ENCODE measurements at regions of chr1 and their contacts with region 1.

Region 1: GRCh38 chr1:21674942-21675341 is 5.8 kb upstream of the RAP1GAP start:
- DNase-seq: no peak
- H3K4me3 ChIP-seq: no peak overlapping the region
- H3K27ac ChIP-seq: no peak overlapping the region
- H3K4me1 ChIP-seq: peaks cover 12% of the 10 kb centered on the region
- H3K27me3 ChIP-seq: no peaks in the 10 kb centered on the region
- CTCF ChIP-seq: no peak
- EP300 ChIP-seq: no peak
- POLR2A ChIP-seq: no peak

Region 2: DNA sequence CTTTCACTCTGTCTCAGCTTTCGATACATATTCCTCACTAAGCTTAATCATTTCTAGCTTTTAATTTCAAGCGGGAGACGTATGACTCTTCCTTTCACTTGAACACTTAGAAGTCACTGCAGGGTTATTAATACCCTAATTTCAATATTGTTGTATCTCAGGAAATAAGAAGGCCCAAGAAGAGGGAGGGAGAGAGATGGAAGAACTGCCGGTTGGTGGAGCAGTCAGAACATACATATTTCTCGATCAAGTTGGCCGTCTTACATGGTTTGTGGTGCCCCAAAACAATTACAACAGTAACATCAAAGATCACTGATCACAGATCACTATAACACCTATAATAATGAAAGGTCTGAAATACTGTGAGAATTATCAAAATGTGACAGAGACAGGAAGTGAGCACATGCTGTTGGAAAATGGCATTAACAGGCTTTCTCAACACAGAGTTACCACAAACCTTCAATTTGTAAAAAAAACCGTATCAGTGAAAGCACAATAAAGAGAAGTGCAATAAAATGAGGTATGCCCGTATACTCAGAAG is 742.4 kb before region 1 on chr1:
- intact Hi-C with region 1: loop called in 1 of 4 experiments (anchors 5 kb)
- DNase-seq: no peak
- H3K4me3 ChIP-seq: no peak overlapping the region
- H3K27ac ChIP-seq: no peak overlapping the region
- H3K4me1 ChIP-seq: peaks cover 1% of the 10 kb centered on the region
- H3K27me3 ChIP-seq: no peaks in the 10 kb centered on the region
- CTCF ChIP-seq: no peak
- EP300 ChIP-seq: no peak
- POLR2A ChIP-seq: no peak

Region 3: DNA sequence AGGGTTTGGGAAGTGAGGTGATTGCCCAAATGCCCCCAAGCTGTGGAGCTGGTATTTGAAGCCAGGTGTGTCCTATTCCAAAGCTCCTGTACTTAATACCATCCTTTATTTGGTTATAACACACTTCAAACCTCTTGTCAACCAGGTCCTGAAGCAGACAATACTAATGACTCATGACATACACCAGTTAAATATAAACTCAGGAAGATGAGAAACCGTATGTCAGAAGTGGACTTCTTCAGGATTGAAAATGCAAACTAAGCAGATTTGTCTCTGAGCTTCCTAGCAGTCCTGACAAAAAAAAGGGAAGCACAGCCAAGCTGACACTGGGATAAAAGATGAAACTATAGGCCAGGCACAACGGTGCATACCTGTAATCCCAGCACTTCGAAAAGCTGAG is 95.2 kb before region 1 on chr1:
- intact Hi-C with region 1: no loop called
- DNase-seq: no peak
- H3K4me3 ChIP-seq: no peak overlapping the region
- H3K27ac ChIP-seq: no peak overlapping the region
- H3K4me1 ChIP-seq: peaks cover 2% of the 10 kb centered on the region
- H3K27me3 ChIP-seq: no peaks in the 10 kb centered on the region
- CTCF ChIP-seq: no peak
- EP300 ChIP-seq: no peak
- POLR2A ChIP-seq: no peak

Region 4: DNA sequence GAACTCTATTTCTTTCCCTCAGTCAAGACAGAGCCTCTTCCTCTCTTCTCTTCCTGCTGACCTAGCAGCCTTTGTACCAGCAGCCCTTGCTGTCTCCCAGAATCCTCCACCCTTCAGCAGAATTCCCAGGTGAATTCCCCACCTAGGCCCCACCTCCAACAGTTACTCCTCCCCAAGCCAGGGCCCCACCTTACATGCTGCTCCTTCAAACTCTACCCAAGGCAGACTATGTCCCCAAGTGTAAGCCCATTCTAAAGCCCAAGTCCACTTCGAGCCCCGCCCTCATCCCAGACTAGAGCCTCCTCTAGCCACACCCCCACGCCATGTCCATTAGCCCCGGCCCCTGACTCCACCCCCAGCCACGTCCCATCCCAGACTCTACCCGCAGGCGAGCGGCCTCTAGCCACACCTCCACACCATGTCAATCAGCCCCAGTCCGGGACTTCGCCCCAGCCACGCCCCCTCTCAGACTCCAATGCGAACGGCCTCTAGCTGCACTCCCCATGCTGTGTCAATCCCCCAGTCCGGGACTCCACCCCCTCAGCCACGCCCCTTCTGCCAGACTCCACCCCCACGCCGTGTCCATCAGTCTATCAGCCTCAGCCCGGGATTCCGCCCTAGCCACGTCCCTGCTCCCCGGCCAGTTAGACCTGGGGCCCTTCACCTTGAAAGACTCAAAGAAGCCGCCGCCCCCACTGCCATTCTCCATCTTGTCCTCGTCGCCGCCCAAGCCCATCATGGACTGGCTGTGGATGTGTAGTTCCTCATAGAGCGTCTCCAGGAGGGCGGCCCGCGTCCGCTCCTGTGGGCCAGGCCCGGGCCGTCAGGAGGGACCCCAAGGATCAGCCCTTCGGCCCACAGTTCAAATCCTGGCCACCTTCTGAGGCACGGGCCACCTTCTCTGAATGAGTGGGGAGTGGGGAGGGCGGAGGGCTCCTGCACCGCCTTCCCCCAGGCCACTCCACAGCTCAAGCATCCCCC is 67.1 kb before region 1 on chr1:
- intact Hi-C with region 1: no loop called
- DNase-seq: peak; percentile 29 to 69 (median 60)
- H3K4me3 ChIP-seq: no peak overlapping the region
- H3K27ac ChIP-seq: no peak overlapping the region
- H3K4me1 ChIP-seq: no peaks in the 10 kb centered on the region
- H3K27me3 ChIP-seq: no peaks in the 10 kb centered on the region
- CTCF ChIP-seq: no peak
- EP300 ChIP-seq: no peak
- POLR2A ChIP-seq: no peak

Region 5: GRCh38 chr1:21874778-21875547 is 200.0 kb after region 1 on chr1:
- intact Hi-C with region 1: no loop called
- DNase-seq: no peak
- H3K4me3 ChIP-seq: no peak overlapping the region
- H3K27ac ChIP-seq: no peak overlapping the region
- H3K4me1 ChIP-seq: peaks cover 3% of the 10 kb centered on the region
- H3K27me3 ChIP-seq: no peaks in the 10 kb centered on the region
- CTCF ChIP-seq: no peak
- EP300 ChIP-seq: no peak
- POLR2A ChIP-seq: no peak

Measured in ovary (tissue), 10 donors.